Tibial artery (tissue), 4 donors: ENCODE measurements at regions of chr11 and their contacts with region 1.

Region 1: GRCh38 chr11:102495161-102496042 is 35.1 kb downstream of the MMP7 start:
- DNase-seq: no peak
- H3K4me3 ChIP-seq: no peak overlapping the region
- H3K27ac ChIP-seq: no peak overlapping the region
- H3K4me1 ChIP-seq: no peaks in the 10 kb centered on the region
- H3K27me3 ChIP-seq: peaks cover 0 to 2% of the 10 kb centered on the region in 2 donors
- CTCF ChIP-seq: peak; percentile 66 to 84

Region 2: DNA sequence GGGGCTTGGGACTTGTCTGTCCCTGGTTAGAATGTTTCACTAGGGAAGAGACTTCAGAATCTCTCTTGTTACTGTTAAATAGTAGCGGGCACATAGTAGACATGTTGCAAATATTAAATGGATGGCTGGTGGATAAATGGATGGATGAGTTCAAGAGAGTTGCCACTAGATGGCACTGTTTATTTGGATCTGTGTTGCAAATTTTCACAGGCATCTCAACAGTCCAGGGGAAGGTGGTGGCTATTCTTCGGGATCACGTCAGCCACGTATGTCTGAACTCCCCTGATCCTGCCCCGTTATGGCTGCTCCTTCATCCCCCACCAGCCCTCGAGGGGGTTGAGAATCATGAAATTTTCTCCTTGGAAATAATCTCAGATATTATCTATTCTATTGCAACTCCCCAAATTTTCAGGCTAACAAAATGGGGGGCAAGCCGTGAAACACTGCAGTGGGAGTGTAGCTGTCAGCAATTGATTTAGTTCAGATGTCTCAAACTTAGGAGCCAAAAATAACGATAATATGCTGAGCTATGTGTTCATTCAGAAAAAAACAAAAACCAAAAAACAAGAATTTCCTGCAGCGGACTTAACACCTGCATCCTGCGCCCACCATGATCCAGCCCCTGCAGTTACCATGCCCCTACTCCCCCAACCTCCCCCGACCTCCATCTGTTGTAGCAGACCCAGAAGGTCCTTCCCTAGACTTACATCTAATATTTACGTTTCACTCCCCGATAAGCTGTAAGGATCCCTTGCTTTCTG is 207.3 kb before region 1 on chr11:
- intact Hi-C with region 1: loop called (anchors 5 kb)
- DNase-seq: no peak
- H3K4me3 ChIP-seq: no peak overlapping the region
- H3K27ac ChIP-seq: peak overlapping the region in 1 of 2 donors; percentile 48
- H3K4me1 ChIP-seq: peaks cover 0 to 32% (median 12%) of the 10 kb centered on the region in 4 donors
- H3K27me3 ChIP-seq: no peaks in the 10 kb centered on the region
- CTCF ChIP-seq: peak; percentile 72 to 75

Region 3: DNA sequence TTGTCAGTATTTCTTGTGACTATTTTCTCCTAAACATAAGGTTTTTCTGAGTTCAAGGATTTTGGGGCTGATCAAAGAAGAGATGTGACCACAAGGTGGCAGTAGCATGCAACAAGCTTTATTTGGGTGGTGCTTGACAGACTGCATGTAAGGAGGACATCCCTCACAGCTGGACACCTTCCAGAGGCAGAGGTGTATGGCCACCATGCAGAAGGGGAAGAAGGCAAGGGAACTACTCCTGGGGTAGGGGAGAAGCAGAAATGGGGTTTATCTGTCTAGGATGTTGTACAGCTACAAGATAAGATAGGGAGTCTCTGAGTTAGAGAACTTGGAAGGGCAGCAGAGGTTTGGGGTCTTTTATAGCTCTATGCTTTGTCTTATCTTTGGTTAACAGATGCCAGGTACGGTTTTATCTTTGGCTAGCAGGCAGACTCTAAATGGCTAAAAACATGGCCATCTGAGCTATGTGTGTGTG is 153.5 kb before region 1 on chr11:
- intact Hi-C with region 1: loop called (anchors 2 kb)
- DNase-seq: peak; percentile 79 to 83
- H3K4me3 ChIP-seq: no peak overlapping the region
- H3K27ac ChIP-seq: no peak overlapping the region
- H3K4me1 ChIP-seq: peaks cover 0 to 8% (median 4%) of the 10 kb centered on the region in 4 donors
- H3K27me3 ChIP-seq: no peaks in the 10 kb centered on the region
- CTCF ChIP-seq: peak; percentile 69

Region 4: GRCh38 chr11:102390667-102391465 is 104.5 kb before region 1 on chr11:
- intact Hi-C with region 1: loop called (anchors 5 kb)
- DNase-seq: peak; percentile 57 to 78
- H3K4me3 ChIP-seq: no peak overlapping the region
- H3K27ac ChIP-seq: no peak overlapping the region
- H3K4me1 ChIP-seq: no peaks in the 10 kb centered on the region
- H3K27me3 ChIP-seq: no peaks in the 10 kb centered on the region
- CTCF ChIP-seq: peak; percentile 77 to 86